Activated T-helper 1 cell treated with anti-CD3 and anti-CD28 coated beads, Interleukin-12 subunit alpha, Interleukin-12 subunit beta, Interleukin-2, Interleukin-4 antibody, amounts not matched to agents 30 ng/mL and 10 ng/mL and 1 ng/mL, durations not matched to agents 14 hours and 24 hours and 36 hours (primary cell): ENCODE measurements at regions of chr20 and their contacts with region 1.

Region 1: GRCh38 chr20:5126512-5127203 is at the start of gene CDS2:
- DNase-seq: peak; percentile 100
- H3K4me3 Mint-ChIP-seq: peak within 1 kb of the TSS; percentile 96
- H3K27ac Mint-ChIP-seq: peak within 1 kb of the TSS; percentile 93
- H3K4me1 Mint-ChIP-seq: peaks cover 52% of the 10 kb centered on the region
- H3K27me3 Mint-ChIP-seq: no peaks in the 10 kb centered on the region
- total RNA-seq, gene CDS2: 39.8 and 42.5 TPM in 2 replicates

Region 2: GRCh38 chr20:3795511-3796468 is 1330.9 kb before region 1 on chr20 and contains the start of gene CDC25B:
- intact Hi-C with region 1: loop called (anchors 10 kb)
- DNase-seq: peak; percentile 81
- H3K4me3 Mint-ChIP-seq: peak within 1 kb of the TSS; percentile 93
- H3K27ac Mint-ChIP-seq: peak within 1 kb of the TSS; percentile 96
- H3K4me1 Mint-ChIP-seq: peaks cover 47% of the 10 kb centered on the region
- H3K27me3 Mint-ChIP-seq: no peaks in the 10 kb centered on the region
- total RNA-seq, gene CDC25B: 71.7 and 76.2 TPM in 2 replicates

Region 3: DNA sequence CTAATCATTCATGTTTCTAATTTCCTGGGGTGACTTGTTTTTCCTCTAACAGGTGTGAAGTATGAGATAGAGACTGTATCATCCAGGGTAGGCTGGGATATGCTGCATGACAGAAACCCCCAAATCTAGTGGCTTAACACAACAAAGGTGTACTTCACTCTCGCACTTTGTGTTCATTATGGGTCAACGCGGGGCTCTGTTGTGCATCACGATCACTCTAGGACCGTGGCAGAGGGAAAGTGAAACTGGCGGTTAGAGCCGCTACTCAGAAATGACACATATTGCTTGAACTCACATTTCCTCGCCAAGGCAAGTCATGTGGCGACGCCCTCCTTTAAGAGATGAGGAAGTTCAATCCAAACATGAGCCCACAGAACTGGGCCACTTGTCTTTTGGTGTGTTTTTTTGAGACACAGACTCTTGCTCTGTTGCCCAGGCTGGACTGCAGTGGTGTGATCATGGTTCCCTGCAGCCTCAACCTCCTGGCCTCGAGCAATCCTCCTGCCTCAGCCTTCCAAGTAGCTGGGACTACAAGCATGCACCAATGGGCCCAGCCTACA is 48.2 kb before region 1 on chr20:
- intact Hi-C with region 1: loop called (anchors 2 kb)
- DNase-seq: peak; percentile 81
- H3K4me3 Mint-ChIP-seq: peak overlapping the region; percentile 63
- H3K27ac Mint-ChIP-seq: peak overlapping the region; percentile 89
- H3K4me1 Mint-ChIP-seq: peaks cover 56% of the 10 kb centered on the region
- H3K27me3 Mint-ChIP-seq: no peaks in the 10 kb centered on the region

Region 4: DNA sequence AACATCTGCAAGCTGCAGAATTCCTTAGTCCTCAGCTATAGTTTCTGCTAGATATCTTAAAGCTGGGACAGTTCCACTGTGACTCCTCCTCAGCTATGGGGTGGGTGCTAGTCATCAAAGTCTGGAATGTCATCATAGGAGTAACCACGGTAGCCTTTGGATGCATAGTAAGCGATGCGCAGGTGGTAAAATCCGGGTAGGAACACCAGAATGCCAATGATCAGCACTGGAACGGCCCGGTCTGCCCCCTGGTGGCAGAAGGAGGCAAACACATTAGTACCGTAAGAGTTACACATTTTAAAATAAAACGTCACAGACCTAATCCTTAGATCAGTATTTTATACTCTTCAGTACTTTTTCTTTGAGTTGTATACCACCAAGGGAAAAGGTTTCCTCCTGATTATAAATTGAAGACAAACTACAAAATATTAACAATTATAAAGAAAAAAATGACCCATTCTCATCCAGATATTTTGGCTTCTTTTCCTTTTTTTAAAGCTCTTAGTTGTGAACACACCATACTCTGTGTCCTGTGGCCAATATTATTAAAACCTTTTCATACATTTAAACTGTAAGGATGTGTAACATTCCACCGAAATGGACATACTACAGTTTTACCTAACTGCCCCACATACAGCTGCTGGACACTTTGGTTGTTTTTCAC is 25.8 kb before region 1 on chr20:
- intact Hi-C with region 1: no loop called
- DNase-seq: peak; percentile 49
- H3K4me3 Mint-ChIP-seq: no peak overlapping the region
- H3K27ac Mint-ChIP-seq: no peak overlapping the region
- H3K4me1 Mint-ChIP-seq: peaks cover 9% of the 10 kb centered on the region
- H3K27me3 Mint-ChIP-seq: no peaks in the 10 kb centered on the region

Region 5: GRCh38 chr20:5222919-5223634 is 96.4 kb after region 1 on chr20:
- intact Hi-C with region 1: loop called (anchors 1 kb)
- DNase-seq: peak; percentile 30
- H3K4me3 Mint-ChIP-seq: no peak overlapping the region
- H3K27ac Mint-ChIP-seq: no peak overlapping the region
- H3K4me1 Mint-ChIP-seq: no peaks in the 10 kb centered on the region
- H3K27me3 Mint-ChIP-seq: no peaks in the 10 kb centered on the region

Region 6: GRCh38 chr20:5749952-5750779 is 623.5 kb after region 1 on chr20 and contains the start of gene SHLD1:
- intact Hi-C with region 1: loop called (anchors 5 kb)
- DNase-seq: peak; percentile 69
- H3K4me3 Mint-ChIP-seq: peak within 1 kb of the TSS; percentile 87
- H3K27ac Mint-ChIP-seq: peak within 1 kb of the TSS; percentile 87
- H3K4me1 Mint-ChIP-seq: peaks cover 23% of the 10 kb centered on the region
- H3K27me3 Mint-ChIP-seq: peaks cover 8% of the 10 kb centered on the region
- total RNA-seq, gene SHLD1: 8.1 and 10.8 TPM in 2 replicates

Region 7: DNA sequence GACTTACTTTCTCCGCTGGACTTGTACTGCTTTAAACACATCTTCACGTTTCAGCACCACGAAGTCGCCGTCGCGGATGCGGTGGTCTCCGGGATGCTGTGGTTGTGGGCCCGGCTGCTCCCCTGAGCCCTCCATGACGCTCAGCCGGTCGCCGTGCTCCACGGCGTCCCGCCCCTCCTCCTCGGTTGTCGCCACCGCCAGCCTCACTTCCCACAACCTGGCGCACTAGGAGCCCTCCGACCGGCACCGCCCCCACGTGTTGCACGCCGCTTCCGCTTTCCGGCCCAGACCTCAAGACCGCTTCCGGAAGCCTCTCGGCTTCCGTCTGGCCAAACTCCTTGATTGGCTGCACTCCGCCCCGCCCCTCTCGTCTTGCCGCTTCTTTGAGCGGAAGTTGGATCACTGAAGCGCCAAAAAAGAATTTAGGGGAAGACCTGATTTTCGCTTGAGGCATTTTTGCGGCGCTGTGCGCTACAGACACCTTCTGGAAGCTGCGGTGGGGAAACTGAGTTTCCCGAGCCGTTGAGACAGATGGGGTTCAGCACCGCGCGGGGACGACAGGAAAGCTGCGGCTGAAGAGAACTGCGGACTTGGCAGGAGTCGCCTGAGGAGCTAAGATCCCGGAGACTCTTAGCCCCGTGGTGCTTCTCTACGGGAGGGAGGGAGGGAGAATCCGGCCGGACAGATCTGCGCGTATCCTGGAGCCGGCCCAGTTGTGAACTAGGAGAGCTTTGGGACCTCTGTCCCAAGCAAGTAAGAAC is 823.8 kb after region 1 on chr20 and contains the starts of genes MCM8 and TRMT6:
- intact Hi-C with region 1: loop called (anchors 2 kb)
- DNase-seq: peak; percentile 95
- H3K4me3 Mint-ChIP-seq: peak within 1 kb of the TSS; percentile 90
- H3K27ac Mint-ChIP-seq: peak within 1 kb of the TSS; percentile 91
- H3K4me1 Mint-ChIP-seq: peaks cover 56% of the 10 kb centered on the region
- H3K27me3 Mint-ChIP-seq: peaks cover 2% of the 10 kb centered on the region
- total RNA-seq, gene MCM8: 36.5 and 38.8 TPM in 2 replicates
- total RNA-seq, gene TRMT6: 36.1 and 38.9 TPM in 2 replicates